ENCODE measurements at regions of chr17 and their contacts with region 1.

Region 1: DNA sequence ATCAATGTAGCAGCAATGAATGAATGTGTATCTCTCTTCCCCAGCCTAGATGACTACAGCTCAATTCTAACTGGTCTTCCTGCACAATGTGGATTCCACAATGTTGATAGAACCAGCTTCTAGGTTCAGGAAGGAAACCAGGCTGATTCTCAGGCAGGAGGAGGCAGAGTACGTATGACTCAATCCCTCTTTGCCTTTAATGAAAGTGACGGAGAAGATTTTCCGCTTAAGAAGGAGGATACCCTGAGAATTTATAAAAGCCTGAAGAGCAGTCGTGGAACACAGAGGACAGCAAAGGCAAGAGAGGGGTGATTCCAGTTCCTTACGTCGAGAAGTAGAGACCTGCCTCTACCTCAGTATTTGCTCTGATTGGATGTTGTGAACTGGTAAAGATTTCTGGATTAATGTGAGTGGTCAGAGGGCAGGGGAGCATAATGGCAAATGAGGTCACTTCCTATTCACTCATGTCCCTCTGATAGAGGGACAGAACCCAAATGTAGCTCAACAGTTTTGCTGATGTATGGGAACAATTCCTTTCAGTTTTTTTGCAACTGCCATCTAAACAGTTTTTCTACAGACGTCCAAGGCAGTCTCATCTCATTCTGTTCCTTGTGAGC is 15.0 kb upstream of the SLC16A11 start:
- DNase-seq: no peak
- ATAC-seq: no peak
- H3K4me3 Mint-ChIP-seq: no peak overlapping the region
- H3K27ac Mint-ChIP-seq: no peak overlapping the region
- H3K4me1 Mint-ChIP-seq: peaks cover 18% of the 10 kb centered on the region
- H3K27me3 Mint-ChIP-seq: peaks cover 9% of the 10 kb centered on the region
- CTCF ChIP-seq: no peak

Region 2: DNA sequence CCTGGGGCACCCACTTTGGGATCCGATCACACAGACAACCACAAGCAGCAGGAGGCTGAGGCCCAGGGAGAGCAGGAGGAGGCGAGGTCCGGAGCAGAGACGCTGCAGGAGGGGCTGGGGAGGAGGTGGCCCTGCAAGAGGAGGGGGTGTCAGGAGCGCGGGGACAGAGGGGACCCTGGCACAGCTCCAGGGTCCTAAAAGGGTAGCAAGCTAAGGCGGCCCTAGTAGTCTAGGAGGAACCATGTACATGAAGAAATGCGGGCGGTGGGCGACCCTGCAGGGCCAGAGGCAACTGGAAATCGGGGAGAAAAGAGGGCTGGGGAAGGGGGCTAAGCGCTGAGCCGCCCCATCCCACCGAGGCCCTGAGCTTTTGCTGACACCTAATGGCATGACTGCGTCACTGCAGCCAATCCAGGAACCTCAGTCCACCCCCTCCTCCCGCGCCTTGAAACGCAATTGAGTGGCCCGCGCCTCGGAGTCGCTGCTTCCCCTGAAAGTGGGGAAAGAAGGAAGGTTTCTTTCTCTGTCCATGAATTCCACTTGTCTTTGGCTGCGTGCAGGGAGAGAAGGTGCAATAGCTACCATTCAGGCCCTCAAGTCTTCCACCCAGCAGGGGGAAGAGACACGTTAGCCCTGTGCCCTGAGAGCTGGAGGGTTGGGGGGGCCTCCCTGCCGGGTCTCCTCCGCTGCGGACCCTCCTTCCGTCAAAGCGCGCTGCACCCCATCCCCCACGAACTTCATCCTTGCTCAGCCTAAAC is 118.4 kb after region 1 on chr17:
- CTCF ChIA-PET with region 1: interaction called, 10 read pairs
- POLR2A ChIA-PET with region 1: no interaction called
- intact Hi-C with region 1: no loop called
- DNase-seq: peak; percentile 75
- ATAC-seq: peak; percentile 83
- H3K4me3 Mint-ChIP-seq: peak overlapping the region; percentile 70
- H3K27ac Mint-ChIP-seq: no peak overlapping the region
- H3K4me1 Mint-ChIP-seq: peaks cover 12% of the 10 kb centered on the region
- H3K27me3 Mint-ChIP-seq: peaks cover 12% of the 10 kb centered on the region
- CTCF ChIP-seq: peak; percentile 90

Measured in activated CD8-positive, alpha-beta T cell treated with anti-CD3 and anti-CD28 coated beads for 36 hours (primary cell).